Activated T-helper 1 cell treated with anti-CD3 and anti-CD28 coated beads, Interleukin-12 subunit alpha, Interleukin-12 subunit beta, Interleukin-2, Interleukin-4 antibody, amounts not matched to agents 30 ng/mL and 10 ng/mL and 1 ng/mL, durations not matched to agents 14 hours and 24 hours and 36 hours (primary cell): ENCODE measurements at regions of chr6 and their contacts with region 1.

Region 1: DNA sequence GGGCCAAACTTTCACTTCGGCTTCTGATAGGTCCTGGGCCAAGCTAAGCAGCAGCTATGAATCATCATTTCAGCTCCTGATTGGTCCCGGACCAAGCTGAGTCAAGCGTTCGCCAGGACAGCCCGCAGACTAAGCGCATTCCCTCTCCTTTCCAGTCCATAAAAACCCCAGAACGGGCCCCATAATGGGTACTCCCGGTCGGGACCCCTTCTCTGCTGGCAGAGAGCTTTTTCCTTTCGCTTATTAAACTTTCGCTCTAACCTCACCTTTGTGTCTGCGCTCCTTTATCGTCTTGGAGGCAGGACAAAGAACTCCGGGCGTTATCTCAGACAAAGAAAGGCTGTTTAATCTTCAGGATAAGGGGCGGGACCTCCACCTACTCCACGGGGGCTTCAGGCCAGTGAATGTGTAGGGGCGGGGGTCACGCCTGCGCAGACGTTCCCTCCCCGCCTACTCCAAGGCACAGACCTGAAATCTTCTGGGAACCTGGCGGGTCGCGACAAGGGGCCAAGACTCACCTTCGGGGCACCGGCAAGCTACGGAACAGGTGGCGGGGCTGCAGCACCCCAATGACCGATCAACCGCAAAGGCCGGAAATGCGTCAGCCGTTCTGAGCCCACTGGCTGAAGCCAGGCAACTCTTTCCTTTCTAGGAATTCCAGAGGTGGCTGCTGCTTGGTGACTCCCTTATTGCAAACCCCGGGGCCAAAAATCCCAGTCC is at the start of gene ZSCAN31:
- DNase-seq: peak; percentile 56
- H3K4me3 Mint-ChIP-seq: no peak within 1 kb of the TSS
- H3K27ac Mint-ChIP-seq: no peak within 1 kb of the TSS
- H3K4me1 Mint-ChIP-seq: no peaks in the 10 kb centered on the region
- H3K27me3 Mint-ChIP-seq: peaks cover 7% of the 10 kb centered on the region
- total RNA-seq, gene ZSCAN31: 1.0 and 1.2 TPM in 2 replicates

Region 2: DNA sequence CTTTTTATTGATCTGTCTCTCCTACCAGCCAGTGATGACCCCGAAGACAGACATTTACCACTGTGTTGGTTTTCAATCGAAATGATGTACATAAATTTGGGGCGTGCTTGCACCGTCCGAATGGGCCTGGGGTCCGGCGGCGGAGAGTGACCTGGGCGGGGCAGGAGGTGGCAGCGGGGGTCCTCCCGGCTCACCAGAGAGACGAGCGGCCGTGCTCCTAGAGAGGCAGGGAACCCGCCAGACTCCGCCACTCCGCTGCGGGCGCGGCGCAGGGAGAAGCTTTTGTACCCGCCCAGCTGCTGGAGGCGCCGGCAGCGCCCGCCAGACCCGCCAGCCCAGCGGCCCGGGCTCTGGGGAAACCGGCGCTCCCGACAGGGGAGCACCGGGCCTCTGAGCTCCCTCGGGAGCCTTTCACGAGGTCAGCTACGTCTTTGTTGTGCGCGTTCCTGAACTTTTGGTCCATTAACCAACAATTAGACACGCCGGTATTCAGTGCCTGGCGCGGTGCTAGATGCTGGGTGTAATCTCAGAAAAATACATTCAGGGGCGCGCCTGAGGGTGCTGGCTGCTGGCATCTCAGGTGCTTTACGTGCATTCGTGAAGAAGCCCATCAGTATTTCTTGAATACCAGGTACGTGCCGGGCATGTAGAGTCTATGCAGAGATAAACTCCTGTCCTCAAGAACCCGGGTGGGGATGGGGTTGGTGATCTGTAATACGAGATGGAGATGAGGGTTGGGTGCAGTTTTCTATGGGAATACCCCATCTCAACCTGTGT is 54.2 kb before region 1 on chr6 and contains the start of gene PGBD1:
- intact Hi-C with region 1: loop called (anchors 5 kb)
- DNase-seq: peak; percentile 36
- H3K4me3 Mint-ChIP-seq: peak within 1 kb of the TSS; percentile 86
- H3K27ac Mint-ChIP-seq: no peak within 1 kb of the TSS
- H3K4me1 Mint-ChIP-seq: peaks cover 7% of the 10 kb centered on the region
- H3K27me3 Mint-ChIP-seq: peaks cover 2% of the 10 kb centered on the region
- total RNA-seq, gene PGBD1: 1.7 and 2.0 TPM in 2 replicates

Region 3: GRCh38 chr6:28807682-28808280 is 472.1 kb after region 1 on chr6:
- intact Hi-C with region 1: no loop called
- DNase-seq: no peak
- H3K4me3 Mint-ChIP-seq: no peak overlapping the region
- H3K27ac Mint-ChIP-seq: peak overlapping the region; percentile 18
- H3K4me1 Mint-ChIP-seq: peaks cover 26% of the 10 kb centered on the region
- H3K27me3 Mint-ChIP-seq: peaks cover 92% of the 10 kb centered on the region